HAP-1 (cell line): ENCODE measurements at regions of chr5 and their contacts with region 1.

Region 1: DNA sequence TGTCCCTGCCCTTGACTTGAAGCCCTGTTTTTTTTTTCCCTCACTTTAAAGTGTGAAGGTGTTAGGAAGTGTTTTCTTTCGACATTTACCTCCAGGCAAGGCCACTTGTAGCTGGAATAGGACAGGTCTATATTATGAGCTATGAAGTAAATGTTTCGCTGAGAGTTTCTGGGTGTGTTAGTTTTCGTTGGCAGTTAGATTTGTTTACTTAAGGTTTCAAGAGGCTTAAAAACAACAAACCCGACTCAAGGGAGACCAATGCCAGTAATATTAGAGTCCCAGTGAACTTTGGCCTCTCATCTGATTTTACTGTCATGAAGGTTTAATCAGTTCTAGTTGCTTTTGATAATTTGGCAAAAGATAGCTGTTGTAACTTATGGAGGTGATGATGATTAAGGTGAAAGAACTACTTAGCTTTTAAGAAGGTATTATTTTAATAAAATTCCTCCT is 25.2 kb downstream of the OCLN start:
- DNase-seq: no peak
- H3K4me3 ChIP-seq: no peak overlapping the region
- H3K4me1 ChIP-seq: peaks cover 8% of the 10 kb centered on the region
- H3K27me3 ChIP-seq: no peaks in the 10 kb centered on the region

Region 2: DNA sequence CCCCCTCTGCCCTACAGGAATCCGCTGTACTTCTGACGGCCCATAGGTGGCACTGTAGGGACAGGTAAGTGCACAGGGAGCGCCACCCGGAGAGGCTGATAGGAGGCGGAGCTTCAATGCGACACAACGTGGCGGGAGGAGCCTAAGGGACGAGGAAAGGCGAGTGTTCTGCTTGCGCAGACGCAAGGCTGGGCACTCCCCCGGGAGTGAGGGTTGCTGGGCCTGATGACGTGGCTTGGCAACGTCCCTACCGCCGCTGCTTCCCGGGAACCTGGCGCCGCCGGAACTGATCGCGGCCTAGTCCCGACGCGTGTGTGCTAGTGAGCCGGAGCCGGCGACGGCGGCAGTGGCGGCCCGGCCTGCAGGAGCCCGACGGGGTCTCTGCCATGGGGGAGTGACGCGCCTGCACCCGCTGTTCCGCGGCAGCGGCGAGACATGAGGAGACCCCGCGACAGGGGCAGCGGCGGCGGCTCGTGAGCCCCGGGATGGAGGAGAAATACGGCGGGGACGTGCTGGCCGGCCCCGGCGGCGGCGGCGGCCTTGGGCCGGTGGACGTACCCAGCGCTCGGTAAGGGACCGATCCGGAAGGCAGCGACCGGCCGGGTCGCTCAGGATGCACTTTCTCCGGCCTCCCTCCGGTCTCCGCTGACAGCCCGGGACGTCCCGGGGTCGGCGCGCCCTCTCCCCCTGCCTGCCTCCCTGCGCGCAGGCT is 423.9 kb before region 1 on chr5 and contains the start of gene SLC30A5:
- in situ Hi-C with region 1: loop called (anchors 25 kb)
- DNase-seq: peak; percentile 100
- H3K4me3 ChIP-seq: peak within 1 kb of the TSS; percentile 86
- H3K4me1 ChIP-seq: peaks cover 5% of the 10 kb centered on the region
- H3K27me3 ChIP-seq: no peaks in the 10 kb centered on the region

Region 3: GRCh38 chr5:69115526-69115925 is 402.3 kb before region 1 on chr5:
- in situ Hi-C with region 1: no loop called
- DNase-seq: no peak
- H3K4me3 ChIP-seq: no peak overlapping the region
- H3K4me1 ChIP-seq: no peaks in the 10 kb centered on the region
- H3K27me3 ChIP-seq: no peaks in the 10 kb centered on the region